Head of caudate nucleus (tissue), 42 donors: ENCODE measurements at regions of chr2 and their contacts with region 1.

Region 1: GRCh38 chr2:30702694-30703093 is 104.6 kb downstream of the CAPN13 start:
- DNase-seq: peak in 1 of 42 donors; percentile 1

Region 2: GRCh38 chr2:30208452-30208851 is 494.2 kb before region 1 on chr2:
- intact Hi-C with region 1: loop called (anchors 2 kb)
- DNase-seq: peak; percentile 39 to 86 (median 69)

Region 3: GRCh38 chr2:30666307-30666874 is 36.3 kb before region 1 on chr2:
- intact Hi-C with region 1: no loop called
- DNase-seq: peak in 2 of 42 donors; percentile 8 to 10